AG04450 (cell line): ENCODE measurements at regions of chr13 and their contacts with region 1.

Region 1: GRCh38 chr13:45393941-45394570 is 24.1 kb downstream of the SLC25A30 start:
- DNase-seq: no peak
- H3K4me3 ChIP-seq: no peak overlapping the region
- H3K27ac ChIP-seq: no peak overlapping the region
- H3K27me3 ChIP-seq: no peaks in the 10 kb centered on the region
- CTCF ChIP-seq: peak; percentile 80

Region 2: GRCh38 chr13:45406421-45406820 is 12.4 kb after region 1 on chr13:
- CTCF ChIA-PET with region 1: interaction called, 37 read pairs
- POLR2A ChIA-PET with region 1: no interaction called
- DNase-seq: no peak
- H3K4me3 ChIP-seq: no peak overlapping the region
- H3K27ac ChIP-seq: no peak overlapping the region
- H3K27me3 ChIP-seq: no peaks in the 10 kb centered on the region
- CTCF ChIP-seq: no peak

Region 3: DNA sequence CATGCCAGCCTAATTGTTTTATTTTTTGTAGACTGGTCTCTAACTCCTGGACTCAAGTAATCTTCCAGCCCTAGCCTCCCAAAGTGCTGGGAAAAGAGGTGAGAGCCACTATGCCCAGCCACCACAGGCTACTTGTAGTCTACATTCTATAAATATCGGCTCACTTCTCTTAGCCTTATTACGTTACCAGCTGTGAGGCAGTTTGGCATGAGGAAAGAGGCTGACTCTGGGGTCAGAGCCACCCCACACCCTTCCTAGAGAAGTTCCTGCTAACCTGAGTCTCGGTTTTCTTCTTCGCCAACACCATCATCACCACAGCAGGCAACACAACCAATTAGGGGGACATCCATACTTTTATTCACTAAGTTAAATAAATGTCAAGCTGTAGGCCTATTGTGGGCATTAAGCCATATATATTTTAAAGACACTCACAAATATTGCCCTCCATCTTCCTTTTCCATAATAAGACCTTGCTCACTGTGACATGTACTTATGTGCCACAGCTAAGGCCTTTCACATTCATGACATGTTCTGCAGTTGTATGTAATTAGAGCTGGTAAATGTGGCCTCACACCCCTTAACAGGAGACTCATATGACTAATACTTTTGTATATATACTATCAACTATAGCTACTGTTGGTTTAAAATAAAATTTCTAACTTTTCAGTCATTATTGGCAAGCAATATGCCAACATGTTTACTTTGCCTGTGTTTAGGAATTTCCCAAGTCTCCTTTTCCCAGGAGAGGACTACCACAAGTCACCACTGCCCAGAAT is 18.4 kb after region 1 on chr13:
- CTCF ChIA-PET with region 1: interaction called, 37 read pairs
- POLR2A ChIA-PET with region 1: no interaction called
- DNase-seq: no peak
- H3K4me3 ChIP-seq: no peak overlapping the region
- H3K27ac ChIP-seq: no peak overlapping the region
- H3K27me3 ChIP-seq: no peaks in the 10 kb centered on the region
- CTCF ChIP-seq: no peak